CD14-positive monocyte (primary cell): ENCODE measurements at regions of chr1 and their contacts with region 1.

Region 1: DNA sequence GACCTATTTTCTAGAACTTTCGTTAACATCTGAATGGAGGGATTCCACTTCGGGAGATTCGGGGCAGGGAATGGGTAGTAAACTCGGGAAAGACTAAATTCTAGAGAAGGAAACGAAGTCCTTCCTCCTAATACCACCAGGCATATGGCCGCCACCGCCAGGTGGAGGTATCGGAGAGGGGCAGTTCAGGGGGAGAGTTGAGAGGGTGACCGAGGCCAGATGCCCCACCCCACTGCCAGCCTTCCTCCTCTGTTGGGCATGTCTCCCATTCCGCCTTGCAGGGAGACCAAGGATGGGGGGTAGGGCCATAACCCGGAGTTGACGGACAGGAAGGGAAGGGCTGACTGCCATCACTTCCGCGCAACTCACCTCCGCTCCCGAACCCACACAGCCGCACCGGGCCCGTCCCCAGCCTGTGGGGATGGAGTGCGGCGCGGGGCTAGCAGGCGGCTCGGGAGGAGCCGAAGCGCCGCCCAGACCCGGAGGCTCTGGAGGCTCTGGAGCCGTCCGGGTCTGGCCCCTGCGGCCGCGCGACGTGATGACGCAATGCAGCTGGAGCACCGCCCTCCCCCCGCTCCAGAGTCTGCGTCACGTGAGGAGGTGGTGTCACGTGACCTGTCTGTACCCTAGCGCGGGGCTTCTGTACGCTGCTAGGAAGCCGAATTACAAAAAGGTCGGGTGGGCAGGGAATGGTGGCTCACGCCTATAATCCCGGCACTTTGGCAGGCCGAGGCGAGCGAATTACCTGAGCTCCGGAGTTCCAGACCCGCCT is at the start of gene KLHL12:
- DNase-seq: peak; percentile 94 to 96 (median 96)
- H3K4me3 ChIP-seq: peak within 1 kb of the TSS; percentile 83 to 95 (median 92)
- H3K4me3 Mint-ChIP-seq: peak within 1 kb of the TSS; percentile 91 to 93
- H3K27ac ChIP-seq: peak within 1 kb of the TSS; percentile 88 to 95
- H3K27ac Mint-ChIP-seq: peak within 1 kb of the TSS; percentile 91 to 97 (median 94)
- H3K4me1 ChIP-seq: peaks cover 13 to 25% of the 10 kb centered on the region in 2 donors
- H3K4me1 Mint-ChIP-seq: peaks cover 25% of the 10 kb centered on the region
- H3K27me3 ChIP-seq: no peaks in the 10 kb centered on the region
- H3K27me3 Mint-ChIP-seq: peaks cover 3 to 6% (median 5%) of the 10 kb centered on the region in 3 donors
- CTCF ChIP-seq: peak; percentile 62
- polyA plus RNA-seq, gene KLHL12: 20.7 to 36.7 (median 21.9) TPM

Region 2: GRCh38 chr1:202760589-202760988 is 166.3 kb before region 1 on chr1:
- intact Hi-C with region 1: no loop called
- DNase-seq: peak in 2 of 3 donors; percentile 6 to 53
- H3K4me3 ChIP-seq: no peak overlapping the region
- H3K4me3 Mint-ChIP-seq: no peak overlapping the region
- H3K27ac ChIP-seq: peak overlapping the region in 1 of 2 donors; percentile 1
- H3K27ac Mint-ChIP-seq: peak overlapping the region in 3 of 7 donors; percentile 20 to 23 (median 21)
- H3K4me1 ChIP-seq: peaks cover 14% of the 10 kb centered on the region in 2 donors
- H3K4me1 Mint-ChIP-seq: peaks cover 27% of the 10 kb centered on the region
- H3K27me3 ChIP-seq: no peaks in the 10 kb centered on the region
- H3K27me3 Mint-ChIP-seq: no peaks in the 10 kb centered on the region
- CTCF ChIP-seq: no peak

Region 3: DNA sequence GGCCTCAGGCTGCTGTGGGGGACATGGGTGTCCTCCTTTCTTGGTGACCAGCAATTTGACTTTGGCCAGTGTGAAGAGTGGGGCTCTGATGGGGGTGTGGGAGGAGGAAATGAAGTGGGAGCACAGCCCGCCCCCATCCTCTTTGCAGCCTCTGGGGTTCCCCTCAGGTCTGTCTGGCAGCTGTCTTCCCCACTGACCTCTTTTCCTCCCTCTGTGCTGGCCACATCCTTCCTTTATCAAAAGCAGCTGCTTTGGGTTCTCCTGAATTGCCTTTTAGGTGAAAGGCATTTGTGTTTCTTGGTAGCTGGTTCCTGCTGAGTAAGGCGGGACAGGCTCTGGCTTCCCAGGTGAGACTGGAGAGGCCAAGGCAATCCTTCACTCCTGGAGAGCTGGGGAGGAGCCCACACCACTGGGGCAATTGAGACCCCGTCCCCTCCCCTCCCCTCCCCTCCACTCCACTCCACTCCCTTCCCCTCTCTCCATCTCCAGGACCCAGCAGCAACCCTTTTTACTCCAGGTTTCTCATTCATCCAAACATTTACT is 91.3 kb before region 1 on chr1:
- intact Hi-C with region 1: no loop called
- DNase-seq: no peak
- H3K4me3 ChIP-seq: no peak overlapping the region
- H3K4me3 Mint-ChIP-seq: no peak overlapping the region
- H3K27ac ChIP-seq: no peak overlapping the region
- H3K27ac Mint-ChIP-seq: no peak overlapping the region
- H3K4me1 ChIP-seq: peaks cover 18 to 19% of the 10 kb centered on the region in 2 donors
- H3K4me1 Mint-ChIP-seq: peaks cover 30% of the 10 kb centered on the region
- H3K27me3 ChIP-seq: no peaks in the 10 kb centered on the region
- H3K27me3 Mint-ChIP-seq: peaks cover 3 to 7% (median 6%) of the 10 kb centered on the region in 3 donors
- CTCF ChIP-seq: no peak

Region 4: GRCh38 chr1:202888531-202889360 is 38.2 kb before region 1 on chr1 and contains the start of gene RABIF:
- intact Hi-C with region 1: loop called in 1 of 2 experiments (anchors 2 kb)
- DNase-seq: peak; percentile 94 to 98 (median 95)
- H3K4me3 ChIP-seq: peak within 1 kb of the TSS; percentile 91 to 93 (median 93)
- H3K4me3 Mint-ChIP-seq: peak within 1 kb of the TSS; percentile 96 to 97
- H3K27ac ChIP-seq: peak within 1 kb of the TSS; percentile 96 to 98
- H3K27ac Mint-ChIP-seq: peak within 1 kb of the TSS; percentile 96 to 99 (median 99)
- H3K4me1 ChIP-seq: peaks cover 14 to 30% of the 10 kb centered on the region in 2 donors
- H3K4me1 Mint-ChIP-seq: peaks cover 22% of the 10 kb centered on the region
- H3K27me3 ChIP-seq: no peaks in the 10 kb centered on the region
- H3K27me3 Mint-ChIP-seq: peaks cover 0 to 2% (median 0%) of the 10 kb centered on the region in 3 donors
- CTCF ChIP-seq: no peak
- polyA plus RNA-seq, gene RABIF: 7.8 to 24.6 (median 22.8) TPM

Region 5: DNA sequence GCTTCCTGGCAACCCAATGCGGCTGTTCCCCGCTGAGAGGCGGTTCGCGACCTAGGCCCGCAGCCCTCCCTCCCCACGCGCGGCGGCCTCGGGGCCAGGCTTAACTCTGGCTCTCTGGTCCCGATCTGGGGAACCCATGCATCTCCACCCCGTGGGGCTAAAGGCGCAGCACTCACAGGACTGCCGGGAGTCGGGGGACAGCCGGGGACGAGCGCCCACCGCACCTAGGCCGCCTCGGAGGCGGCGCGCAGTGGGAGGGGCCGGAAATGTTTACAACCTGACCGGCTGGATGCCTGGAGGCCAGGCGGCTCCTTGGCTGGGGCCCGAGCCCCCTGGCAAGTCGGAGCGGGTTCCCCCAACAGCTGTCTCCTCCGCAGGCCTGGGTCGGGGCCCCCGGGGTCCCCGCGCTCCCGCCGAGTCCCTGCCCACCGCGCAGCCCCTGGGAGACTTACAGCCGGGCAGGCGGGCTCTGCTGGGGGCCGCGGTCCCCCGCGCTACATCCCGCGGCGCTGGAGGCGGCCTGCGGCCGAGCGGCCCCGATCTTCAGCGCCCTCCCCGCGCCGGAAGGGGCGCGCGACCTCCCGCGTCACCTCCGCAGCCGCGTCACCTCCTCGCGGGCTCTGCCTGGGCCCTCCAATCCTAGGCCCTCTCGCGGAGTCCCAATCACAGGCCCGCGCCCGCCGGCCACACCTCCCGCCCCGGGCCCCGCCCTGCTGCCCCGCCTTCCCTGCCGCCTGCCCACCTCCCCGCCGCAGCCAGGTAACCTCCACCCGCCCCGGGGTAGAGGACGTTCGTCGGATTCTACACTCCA is 31.0 kb after region 1 on chr1 and contains the start of gene ADIPOR1:
- intact Hi-C with region 1: loop called in 1 of 2 experiments (anchors 1 kb)
- DNase-seq: peak; percentile 83 to 88 (median 87)
- H3K4me3 ChIP-seq: peak within 1 kb of the TSS; percentile 59 to 93 (median 91)
- H3K4me3 Mint-ChIP-seq: peak within 1 kb of the TSS; percentile 87 to 92
- H3K27ac ChIP-seq: peak within 1 kb of the TSS; percentile 75 to 98
- H3K27ac Mint-ChIP-seq: peak within 1 kb of the TSS; percentile 88 to 95 (median 91)
- H3K4me1 ChIP-seq: peaks cover 44 to 54% of the 10 kb centered on the region in 2 donors
- H3K4me1 Mint-ChIP-seq: peaks cover 51% of the 10 kb centered on the region
- H3K27me3 ChIP-seq: no peaks in the 10 kb centered on the region
- H3K27me3 Mint-ChIP-seq: peaks cover 0 to 2% (median 0%) of the 10 kb centered on the region in 3 donors
- CTCF ChIP-seq: peak; percentile 20
- polyA plus RNA-seq, gene ADIPOR1: 140 to 216 (median 197) TPM

Region 6: DNA sequence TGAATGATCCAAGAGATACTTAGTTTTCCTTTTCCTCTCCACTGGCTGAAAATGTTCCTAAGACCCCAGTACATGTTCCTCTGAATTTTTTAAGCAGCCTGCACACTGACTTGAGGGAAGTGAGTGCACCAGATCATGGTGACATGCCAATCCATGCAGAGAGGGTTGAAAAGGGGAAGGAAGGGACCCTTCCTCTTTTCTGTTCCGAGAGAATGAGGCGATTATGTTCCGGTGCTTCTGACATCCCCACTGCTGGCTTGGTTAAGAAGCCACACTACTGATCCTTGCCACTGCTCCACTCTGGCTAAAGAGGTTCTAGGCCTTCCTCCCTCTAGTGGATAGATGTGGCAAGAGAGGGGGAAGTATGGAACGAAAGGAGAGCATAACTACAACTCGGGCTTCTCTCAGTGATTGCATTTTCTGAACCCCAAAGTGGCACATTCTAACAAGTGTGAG is 42.0 kb after region 1 on chr1:
- intact Hi-C with region 1: loop called in 1 of 2 experiments (anchors 5 kb)
- DNase-seq: peak; percentile 96 to 98 (median 97)
- H3K4me3 ChIP-seq: peak overlapping the region in 2 of 3 experiments; percentile 11 to 91
- H3K4me3 Mint-ChIP-seq: peak overlapping the region; percentile 50 to 90
- H3K27ac ChIP-seq: peak overlapping the region; percentile 81 to 91
- H3K27ac Mint-ChIP-seq: peak overlapping the region; percentile 90 to 98 (median 96)
- H3K4me1 ChIP-seq: peaks cover 43 to 51% of the 10 kb centered on the region in 2 donors
- H3K4me1 Mint-ChIP-seq: peaks cover 45% of the 10 kb centered on the region
- H3K27me3 ChIP-seq: no peaks in the 10 kb centered on the region
- H3K27me3 Mint-ChIP-seq: peaks cover 0 to 2% (median 2%) of the 10 kb centered on the region in 3 donors
- CTCF ChIP-seq: peak; percentile 74

Region 7: GRCh38 chr1:202998836-202999750 is 72.2 kb after region 1 on chr1:
- intact Hi-C with region 1: loop called in 1 of 2 experiments (anchors 5 kb)
- DNase-seq: peak; percentile 54 to 71 (median 60)
- H3K4me3 ChIP-seq: no peak overlapping the region
- H3K4me3 Mint-ChIP-seq: peak overlapping the region; percentile 62 to 83
- H3K27ac ChIP-seq: no peak overlapping the region
- H3K27ac Mint-ChIP-seq: peak overlapping the region in 1 of 7 donors; percentile 47
- H3K4me1 ChIP-seq: peaks cover 3 to 6% of the 10 kb centered on the region in 2 donors
- H3K4me1 Mint-ChIP-seq: peaks cover 7% of the 10 kb centered on the region
- H3K27me3 ChIP-seq: no peaks in the 10 kb centered on the region
- H3K27me3 Mint-ChIP-seq: peaks cover 0 to 2% (median 1%) of the 10 kb centered on the region in 3 donors
- CTCF ChIP-seq: peak; percentile 90

Region 8: GRCh38 chr1:203006948-203007871 is 80.3 kb after region 1 on chr1 and contains the start of gene TMEM183A:
- intact Hi-C with region 1: loop called in 1 of 2 experiments (anchors 2 kb)
- DNase-seq: peak; percentile 95 to 96 (median 95)
- H3K4me3 ChIP-seq: peak within 1 kb of the TSS; percentile 64 to 100 (median 72)
- H3K4me3 Mint-ChIP-seq: peak within 1 kb of the TSS; percentile 91 to 97
- H3K27ac ChIP-seq: peak within 1 kb of the TSS; percentile 81 to 98
- H3K27ac Mint-ChIP-seq: peak within 1 kb of the TSS; percentile 96 to 99 (median 98)
- H3K4me1 ChIP-seq: peaks cover 20 to 23% of the 10 kb centered on the region in 2 donors
- H3K4me1 Mint-ChIP-seq: peaks cover 24% of the 10 kb centered on the region
- H3K27me3 ChIP-seq: no peaks in the 10 kb centered on the region
- H3K27me3 Mint-ChIP-seq: peaks cover 0 to 3% (median 0%) of the 10 kb centered on the region in 3 donors
- CTCF ChIP-seq: no peak
- polyA plus RNA-seq, gene TMEM183A: 60.5 to 84.9 (median 70.0) TPM